Left lung (tissue), 14 donors: ENCODE measurements at regions of chr2 and their contacts with region 1.

Region 1: GRCh38 chr2:56754066-56754615 is 570.4 kb downstream of the CCDC85A start:
- DNase-seq: no peak
- ATAC-seq: no peak
- H3K4me3 ChIP-seq: no peak overlapping the region
- H3K27ac ChIP-seq: no peak overlapping the region
- H3K4me1 ChIP-seq: no peaks in the 10 kb centered on the region
- H3K27me3 ChIP-seq: no peaks in the 10 kb centered on the region
- CTCF ChIP-seq: no peak

Region 2: GRCh38 chr2:56183643-56184499 is 570.3 kb before region 1 on chr2 and contains the start of gene CCDC85A:
- intact Hi-C with region 1: loop called in 1 of 2 experiments (anchors 5 kb)
- DNase-seq: peak; percentile 81 to 95 (median 88)
- ATAC-seq: peak; percentile 92
- H3K4me3 ChIP-seq: peak within 1 kb of the TSS; percentile 53 to 61
- H3K27ac ChIP-seq: peak within 1 kb of the TSS; percentile 74 to 76
- H3K4me1 ChIP-seq: peaks cover 0 to 35% of the 10 kb centered on the region in 2 donors
- H3K27me3 ChIP-seq: peaks cover 0 to 60% of the 10 kb centered on the region in 2 donors
- CTCF ChIP-seq: peak; percentile 89 to 92
- polyA plus RNA-seq, gene CCDC85A: 1.2 to 2.6 (median 2.0) TPM

Region 3: GRCh38 chr2:56266761-56267414 is 487.3 kb before region 1 on chr2:
- intact Hi-C with region 1: no loop called
- DNase-seq: no peak
- ATAC-seq: no peak
- H3K4me3 ChIP-seq: no peak overlapping the region
- H3K27ac ChIP-seq: no peak overlapping the region
- H3K4me1 ChIP-seq: no peaks in the 10 kb centered on the region
- H3K27me3 ChIP-seq: no peaks in the 10 kb centered on the region
- CTCF ChIP-seq: no peak